CD4-positive, alpha-beta memory T cell (primary cell): ENCODE measurements at regions of chr3 and their contacts with region 1.

Region 1: DNA sequence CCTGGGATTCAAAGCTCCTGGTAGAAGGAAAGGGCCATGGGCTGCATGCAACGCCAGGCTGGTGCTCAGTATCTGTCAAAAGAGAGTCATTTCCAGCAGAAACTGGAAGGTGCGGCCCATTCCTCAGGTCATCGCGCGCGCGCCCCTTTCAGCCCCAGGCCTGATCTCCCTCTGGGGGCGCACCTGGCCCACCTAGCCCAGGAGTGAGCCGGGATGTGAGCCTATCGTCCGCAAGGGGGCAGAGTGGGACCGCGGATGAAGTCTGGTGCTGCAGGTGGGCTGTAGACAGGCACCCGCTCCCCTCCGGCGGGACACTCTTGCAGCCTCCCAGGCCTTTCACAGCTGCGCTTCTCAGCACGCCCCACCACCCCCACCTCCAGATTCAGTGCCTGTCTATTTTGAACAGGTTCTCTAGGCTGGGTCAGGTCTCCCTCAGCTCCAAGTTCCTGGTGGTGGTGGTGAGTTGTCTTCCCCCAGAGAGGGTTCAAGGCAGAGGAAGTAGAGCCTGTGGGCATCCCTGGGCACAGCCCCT is 5.8 kb upstream of the RPL29 start:
- DNase-seq: peak; percentile 81 to 86 (median 84)
- H3K4me3 ChIP-seq: no peak overlapping the region
- H3K4me3 Mint-ChIP-seq: peak overlapping the region in 5 of 8 donors; percentile 4 to 26 (median 8)
- H3K27ac ChIP-seq: no peak overlapping the region
- H3K27ac Mint-ChIP-seq: peak overlapping the region in 4 of 7 donors; percentile 46 to 80 (median 60)
- H3K4me1 ChIP-seq: peaks cover 21% of the 10 kb centered on the region
- H3K4me1 Mint-ChIP-seq: peaks cover 3 to 22% (median 12%) of the 10 kb centered on the region in 4 donors
- H3K27me3 ChIP-seq: no peaks in the 10 kb centered on the region
- H3K27me3 Mint-ChIP-seq: no peaks in the 10 kb centered on the region

Region 2: GRCh38 chr3:51963951-51964451 is 37.5 kb before region 1 on chr3:
- CTCF ChIA-PET with region 1: no interaction called
- POLR2A ChIA-PET with region 1: no interaction called
- intact Hi-C with region 1: no loop called
- DNase-seq: no peak
- H3K4me3 ChIP-seq: no peak overlapping the region
- H3K4me3 Mint-ChIP-seq: no peak overlapping the region
- H3K27ac ChIP-seq: no peak overlapping the region
- H3K27ac Mint-ChIP-seq: peak overlapping the region in 1 of 7 donors; percentile 35
- H3K4me1 ChIP-seq: peaks cover 22% of the 10 kb centered on the region
- H3K4me1 Mint-ChIP-seq: peaks cover 9 to 25% (median 17%) of the 10 kb centered on the region in 4 donors
- H3K27me3 ChIP-seq: no peaks in the 10 kb centered on the region
- H3K27me3 Mint-ChIP-seq: no peaks in the 10 kb centered on the region

Region 3: GRCh38 chr3:52036222-52036694 is 34.7 kb after region 1 on chr3:
- CTCF ChIA-PET with region 1: interaction called, 13 read pairs
- POLR2A ChIA-PET with region 1: no interaction called
- intact Hi-C with region 1: no loop called
- DNase-seq: no peak
- H3K4me3 ChIP-seq: no peak overlapping the region
- H3K4me3 Mint-ChIP-seq: no peak overlapping the region
- H3K27ac ChIP-seq: no peak overlapping the region
- H3K27ac Mint-ChIP-seq: peak overlapping the region in 1 of 7 donors; percentile 30
- H3K4me1 ChIP-seq: no peaks in the 10 kb centered on the region
- H3K4me1 Mint-ChIP-seq: peaks cover 0 to 6% (median 0%) of the 10 kb centered on the region in 4 donors
- H3K27me3 ChIP-seq: no peaks in the 10 kb centered on the region
- H3K27me3 Mint-ChIP-seq: no peaks in the 10 kb centered on the region

Region 4: GRCh38 chr3:52144034-52144795 is 142.7 kb after region 1 on chr3:
- CTCF ChIA-PET with region 1: interaction called, 147 read pairs
- POLR2A ChIA-PET with region 1: interaction called, 10 read pairs
- intact Hi-C with region 1: no loop called
- DNase-seq: peak; percentile 80 to 91 (median 82)
- H3K4me3 ChIP-seq: no peak overlapping the region
- H3K4me3 Mint-ChIP-seq: no peak overlapping the region
- H3K27ac ChIP-seq: no peak overlapping the region
- H3K27ac Mint-ChIP-seq: peak overlapping the region in 6 of 7 donors; percentile 32 to 82 (median 60)
- H3K4me1 ChIP-seq: peaks cover 6% of the 10 kb centered on the region
- H3K4me1 Mint-ChIP-seq: peaks cover 6 to 11% (median 9%) of the 10 kb centered on the region in 4 donors
- H3K27me3 ChIP-seq: no peaks in the 10 kb centered on the region
- H3K27me3 Mint-ChIP-seq: no peaks in the 10 kb centered on the region

Region 5: DNA sequence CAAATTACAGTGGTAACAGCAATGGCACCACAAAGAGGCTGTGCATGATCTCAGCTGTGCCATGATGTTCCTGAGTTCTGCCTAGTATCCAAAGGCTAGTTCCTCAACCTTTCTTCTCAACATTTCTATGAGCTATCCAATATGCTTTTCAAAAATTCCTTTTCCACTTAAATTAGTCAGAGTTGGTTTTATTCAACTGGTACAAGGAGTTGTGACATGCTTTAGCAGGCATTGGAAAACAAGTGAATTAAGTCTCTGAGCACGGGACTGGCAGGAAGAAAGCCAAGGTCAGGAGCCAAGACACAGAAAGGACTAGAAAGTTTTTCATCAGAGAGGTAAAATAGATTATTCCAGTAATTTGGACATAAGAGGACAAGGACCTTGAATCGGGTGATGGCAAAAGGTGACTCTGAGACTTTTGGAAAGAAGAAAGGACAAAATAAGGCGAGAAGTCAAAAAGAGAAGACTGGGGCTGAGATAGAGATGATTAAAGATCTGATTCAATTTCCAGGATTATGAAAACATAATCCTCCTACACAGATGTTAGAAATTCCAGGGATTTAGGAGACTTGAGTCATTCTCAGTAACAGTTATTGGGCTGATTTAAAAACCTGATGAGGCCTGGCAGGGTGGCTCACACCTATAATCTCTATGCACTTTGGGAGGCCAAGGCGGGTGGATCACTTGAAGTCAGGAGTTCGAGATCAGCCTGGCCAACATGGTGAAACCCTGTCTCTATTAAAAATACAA is 648.1 kb after region 1 on chr3:
- CTCF ChIA-PET with region 1: no interaction called
- POLR2A ChIA-PET with region 1: no interaction called
- intact Hi-C with region 1: no loop called
- DNase-seq: no peak
- H3K4me3 ChIP-seq: no peak overlapping the region
- H3K4me3 Mint-ChIP-seq: peak overlapping the region in 1 of 8 donors; percentile 49
- H3K27ac ChIP-seq: no peak overlapping the region
- H3K27ac Mint-ChIP-seq: peak overlapping the region in 1 of 7 donors; percentile 19
- H3K4me1 ChIP-seq: no peaks in the 10 kb centered on the region
- H3K4me1 Mint-ChIP-seq: peaks cover 0 to 4% (median 4%) of the 10 kb centered on the region in 4 donors
- H3K27me3 ChIP-seq: no peaks in the 10 kb centered on the region
- H3K27me3 Mint-ChIP-seq: no peaks in the 10 kb centered on the region